ENCODE measurements at regions of chr19 and their contacts with region 1.

Region 1: DNA sequence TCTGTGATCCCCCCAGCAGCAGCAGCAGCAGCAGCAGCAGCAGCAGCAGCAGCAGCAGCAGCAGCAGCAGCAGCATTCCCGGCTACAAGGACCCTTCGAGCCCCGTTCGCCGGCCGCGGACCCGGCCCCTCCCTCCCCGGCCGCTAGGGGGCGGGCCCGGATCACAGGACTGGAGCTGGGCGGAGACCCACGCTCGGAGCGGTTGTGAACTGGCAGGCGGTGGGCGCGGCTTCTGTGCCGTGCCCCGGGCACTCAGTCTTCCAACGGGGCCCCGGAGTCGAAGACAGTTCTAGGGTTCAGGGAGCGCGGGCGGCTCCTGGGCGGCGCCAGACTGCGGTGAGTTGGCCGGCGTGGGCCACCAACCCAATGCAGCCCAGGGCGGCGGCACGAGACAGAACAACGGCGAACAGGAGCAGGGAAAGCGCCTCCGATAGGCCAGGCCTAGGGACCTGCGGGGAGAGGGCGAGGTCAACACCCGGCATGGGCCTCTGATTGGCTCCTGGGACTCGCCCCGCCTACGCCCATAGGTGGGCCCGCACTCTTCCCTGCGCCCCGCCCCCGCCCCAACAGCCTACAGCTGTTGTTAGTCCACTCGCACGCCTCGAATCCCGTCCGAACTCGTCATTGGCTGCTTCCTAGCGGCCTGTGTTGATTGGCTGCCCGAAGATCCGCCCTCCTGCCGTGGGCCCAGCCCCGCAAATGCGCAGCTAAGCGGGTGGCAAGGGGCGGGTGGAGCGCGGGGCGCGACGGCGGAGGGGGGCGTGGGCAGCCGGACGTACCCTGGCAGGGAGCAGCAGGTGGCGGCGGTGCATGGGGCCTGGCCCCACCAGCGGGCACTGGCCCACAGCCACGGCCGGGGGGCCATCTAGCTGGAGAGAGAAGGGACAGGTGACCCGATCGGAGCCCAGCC is 1.4 kb upstream of the SIX5 start:
- DNase-seq: peak; percentile 84 to 97 (median 93)
- ATAC-seq: peak; percentile 85
- H3K4me3 ChIP-seq: peak overlapping the region; percentile 95
- H3K4me3 Mint-ChIP-seq: peak overlapping the region; percentile 81 to 92 (median 88)
- H3K27ac ChIP-seq: peak overlapping the region; percentile 64
- H3K27ac Mint-ChIP-seq: peak overlapping the region in 7 of 9 donors; percentile 43 to 93 (median 85)
- H3K4me1 ChIP-seq: peaks cover 9 to 13% of the 10 kb centered on the region in 2 donors
- H3K4me1 Mint-ChIP-seq: peaks cover 0 to 16% (median 8%) of the 10 kb centered on the region in 7 donors
- H3K27me3 ChIP-seq: no peaks in the 10 kb centered on the region
- H3K27me3 Mint-ChIP-seq: peaks cover 0 to 28% (median 4%) of the 10 kb centered on the region in 5 donors

Region 2: DNA sequence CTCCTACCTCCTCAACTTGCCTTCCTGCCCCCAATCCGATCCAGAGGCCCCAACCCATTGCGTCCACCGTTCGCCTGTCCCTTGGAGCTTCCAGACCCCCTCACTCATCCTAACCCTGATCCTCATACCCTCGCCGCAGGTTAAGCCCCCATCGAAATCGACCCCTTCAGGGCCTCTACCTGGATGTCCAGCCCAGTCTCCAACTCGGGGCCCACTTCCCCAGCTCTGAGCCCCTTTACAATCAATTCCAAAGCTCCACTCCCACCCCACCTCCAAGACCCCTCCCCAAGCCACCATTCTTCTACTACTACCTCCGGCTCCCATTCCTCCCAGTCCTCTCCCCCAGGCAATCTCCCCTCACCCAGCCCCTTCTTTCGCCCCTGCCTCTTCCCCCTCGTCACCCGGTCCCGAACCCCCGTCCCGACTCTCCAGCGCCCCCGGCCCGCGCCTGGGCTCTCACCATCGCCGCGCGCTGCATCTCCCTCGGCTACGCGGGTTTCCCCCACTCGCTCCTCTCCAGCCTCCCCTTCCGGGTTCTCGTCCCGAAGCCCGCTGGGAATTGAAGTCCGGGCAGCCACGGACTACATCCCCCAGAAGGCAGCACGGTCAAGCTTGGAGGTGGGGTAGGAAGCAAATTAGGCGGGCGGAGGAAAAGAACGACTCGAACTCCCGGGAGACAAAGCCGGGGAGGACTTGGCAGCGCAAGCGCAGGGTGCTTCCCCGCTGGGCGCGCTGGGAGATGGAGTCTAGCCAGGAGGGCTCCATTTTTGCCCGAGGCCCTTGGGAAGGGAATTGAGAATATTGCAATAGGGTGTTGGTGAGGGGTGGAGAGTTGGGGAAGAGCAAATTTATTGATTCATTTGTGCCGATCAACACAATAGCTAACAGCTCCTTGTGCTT is 39.8 kb before region 1 on chr19 and contains the start of gene FBXO46:
- CTCF ChIA-PET with region 1: no interaction called
- POLR2A ChIA-PET with region 1: interaction called, 4 read pairs
- intact Hi-C with region 1: loop called (anchors 1 kb)
- DNase-seq: peak; percentile 74 to 94 (median 90)
- ATAC-seq: peak; percentile 99
- H3K4me3 ChIP-seq: peak within 1 kb of the TSS; percentile 96
- H3K4me3 Mint-ChIP-seq: peak within 1 kb of the TSS; percentile 85 to 98 (median 92)
- H3K27ac ChIP-seq: peak within 1 kb of the TSS; percentile 92
- H3K27ac Mint-ChIP-seq: peak within 1 kb of the TSS; percentile 60 to 93 (median 91)
- H3K4me1 ChIP-seq: peaks cover 6 to 14% of the 10 kb centered on the region in 2 donors
- H3K4me1 Mint-ChIP-seq: peaks cover 27 to 41% (median 33%) of the 10 kb centered on the region in 7 donors
- H3K27me3 ChIP-seq: no peaks in the 10 kb centered on the region
- H3K27me3 Mint-ChIP-seq: peaks cover 0 to under 1% (median 0%) of the 10 kb centered on the region in 5 donors
- total RNA-seq, gene FBXO46: 21.2 to 52.9 (median 36.6) TPM

Region 3: GRCh38 chr19:45798995-45799517 is 28.6 kb after region 1 on chr19:
- CTCF ChIA-PET with region 1: interaction called, 99 read pairs
- POLR2A ChIA-PET with region 1: interaction called, 20 read pairs
- intact Hi-C with region 1: loop called (anchors 1 kb)
- DNase-seq: peak; percentile 31 to 64 (median 56)
- ATAC-seq: peak; percentile 95
- H3K4me3 ChIP-seq: no peak overlapping the region
- H3K4me3 Mint-ChIP-seq: no peak overlapping the region
- H3K27ac ChIP-seq: no peak overlapping the region
- H3K27ac Mint-ChIP-seq: peak overlapping the region in 1 of 9 donors; percentile 17
- H3K4me1 ChIP-seq: peaks cover 0 to 3% of the 10 kb centered on the region in 2 donors
- H3K4me1 Mint-ChIP-seq: peaks cover 0 to 13% (median 10%) of the 10 kb centered on the region in 7 donors
- H3K27me3 ChIP-seq: peaks cover 0 to 8% of the 10 kb centered on the region in 2 donors
- H3K27me3 Mint-ChIP-seq: peaks cover 19 to 72% (median 22%) of the 10 kb centered on the region in 5 donors

Region 4: DNA sequence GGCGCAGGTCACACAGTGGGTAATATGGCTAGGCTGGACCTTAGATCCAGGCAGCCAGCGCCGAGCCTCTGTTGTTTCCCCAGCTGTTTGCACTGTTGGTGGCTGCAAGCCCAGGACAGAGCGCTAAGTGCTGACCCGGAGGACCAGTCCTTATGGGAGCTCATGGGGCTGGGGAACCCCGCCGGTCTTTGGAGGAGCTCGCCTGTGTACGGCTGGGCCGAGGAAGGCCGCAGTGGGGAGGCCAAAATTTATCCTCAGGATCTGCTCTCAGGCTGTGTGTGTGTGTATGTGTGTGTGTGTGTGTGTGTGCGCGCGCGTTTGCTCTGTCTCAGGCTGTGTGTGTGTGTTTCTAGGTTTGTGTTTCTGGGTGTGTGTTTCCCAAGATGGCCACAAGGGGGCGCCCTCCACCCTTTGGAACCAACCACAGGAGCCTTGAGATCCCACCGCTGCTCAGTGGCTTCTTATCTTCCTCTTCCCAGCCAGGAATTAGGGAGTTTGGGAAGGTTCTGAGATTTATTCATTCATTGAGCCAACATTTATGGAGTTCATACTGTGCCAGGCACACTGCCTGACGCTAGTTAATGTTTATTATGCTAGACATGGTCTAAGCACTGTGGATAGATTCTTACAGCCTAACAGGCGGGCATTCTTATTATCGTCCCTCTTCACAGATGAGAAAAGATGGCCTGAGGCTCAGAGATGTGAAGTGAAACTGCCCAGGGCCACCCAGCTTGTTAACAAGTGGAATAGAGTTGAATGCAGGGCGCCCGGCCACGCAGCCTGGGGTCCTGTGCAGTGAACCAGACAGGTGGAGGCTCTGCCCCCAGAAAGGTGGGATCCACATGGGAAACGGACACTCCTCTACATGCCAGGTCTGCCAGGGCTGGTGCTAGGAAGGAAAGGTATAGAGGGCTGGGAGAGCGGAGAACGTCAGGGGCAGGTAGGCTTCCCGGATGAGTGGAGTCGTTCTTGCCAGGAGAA is 239.4 kb after region 1 on chr19:
- CTCF ChIA-PET with region 1: interaction called, 3 read pairs
- POLR2A ChIA-PET with region 1: no interaction called
- intact Hi-C with region 1: loop called (anchors 1 to 5 kb)
- DNase-seq: peak; percentile 25 to 68 (median 54)
- ATAC-seq: peak; percentile 85
- H3K4me3 ChIP-seq: no peak overlapping the region
- H3K4me3 Mint-ChIP-seq: peak overlapping the region in 1 of 10 donors; percentile 77
- H3K27ac ChIP-seq: no peak overlapping the region
- H3K27ac Mint-ChIP-seq: peak overlapping the region in 2 of 9 donors; percentile 45 to 71
- H3K4me1 ChIP-seq: no peaks in the 10 kb centered on the region
- H3K4me1 Mint-ChIP-seq: peaks cover 6 to 10% (median 6%) of the 10 kb centered on the region in 7 donors
- H3K27me3 ChIP-seq: peaks cover 0 to 6% of the 10 kb centered on the region in 2 donors
- H3K27me3 Mint-ChIP-seq: peaks cover 5 to 9% (median 6%) of the 10 kb centered on the region in 5 donors

Measured in naive thymus-derived CD4-positive, alpha-beta T cell (primary cell).